ENCODE measurements at regions of chr7 and their contacts with region 1.

Region 1: GRCh38 chr7:80699045-80699638 is 60.7 kb downstream of the CD36 start:
- DNase-seq: no peak
- H3K4me3 ChIP-seq: no peak overlapping the region
- H3K27ac ChIP-seq: no peak overlapping the region
- H3K4me1 ChIP-seq: no peaks in the 10 kb centered on the region
- H3K27me3 ChIP-seq: no peaks in the 10 kb centered on the region
- CTCF ChIP-seq: peak; percentile 64 to 78 (median 70)
- POLR2A ChIP-seq: no peak

Region 2: DNA sequence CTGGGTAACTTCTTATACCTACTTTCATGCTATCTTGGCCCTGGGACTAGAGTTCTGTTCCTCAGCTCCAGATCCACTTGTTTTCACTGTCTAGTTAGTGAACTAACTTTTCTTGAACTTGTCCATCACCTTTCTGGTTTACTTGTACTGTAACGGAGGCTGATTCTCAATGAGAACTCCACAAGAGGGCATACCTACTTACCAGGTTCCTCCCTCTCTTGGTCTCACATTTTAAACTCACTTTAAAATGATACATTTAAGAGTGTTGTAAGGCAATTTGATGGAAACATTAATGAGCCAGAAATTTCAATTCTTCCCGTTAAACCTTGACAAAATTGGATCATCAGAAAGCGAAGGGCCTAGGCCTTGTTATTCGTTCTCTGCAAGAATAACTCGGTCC is 1357.2 kb before region 1 on chr7:
- intact Hi-C with region 1: no loop called
- DNase-seq: no peak
- H3K4me3 ChIP-seq: no peak overlapping the region
- H3K27ac ChIP-seq: no peak overlapping the region
- H3K4me1 ChIP-seq: no peaks in the 10 kb centered on the region
- H3K27me3 ChIP-seq: no peaks in the 10 kb centered on the region
- CTCF ChIP-seq: no peak
- POLR2A ChIP-seq: no peak

Region 3: DNA sequence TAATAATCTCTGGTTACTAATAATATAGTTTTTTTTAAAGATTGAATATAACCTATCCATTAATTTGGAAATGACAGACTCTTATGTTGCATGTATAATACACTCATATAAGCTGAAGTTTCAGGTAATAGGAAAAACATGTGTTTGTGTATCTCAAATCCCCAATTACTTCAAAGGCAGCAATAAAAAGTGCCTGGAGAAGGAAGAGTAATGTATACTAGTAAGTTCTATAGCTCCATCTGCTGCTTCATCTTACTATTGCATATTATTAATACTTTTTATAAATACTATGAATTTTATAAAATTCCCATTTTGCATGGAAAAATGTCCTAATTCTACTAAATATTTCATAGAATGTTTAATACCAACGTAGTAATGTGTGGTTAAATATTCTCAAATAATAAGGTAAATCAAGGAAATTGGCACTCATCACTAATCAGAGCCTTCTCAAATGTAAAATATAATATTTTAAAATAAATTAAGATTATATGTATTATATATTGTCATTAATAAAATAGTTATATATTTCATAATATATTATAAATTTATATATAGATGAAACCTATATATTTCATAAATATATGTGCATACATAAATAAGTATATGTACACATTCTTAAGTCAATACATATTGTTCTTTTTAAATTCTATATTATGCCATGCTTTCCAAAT is 758.8 kb after region 1 on chr7:
- intact Hi-C with region 1: loop called (anchors 5 kb)
- DNase-seq: no peak
- H3K4me3 ChIP-seq: no peak overlapping the region
- H3K27ac ChIP-seq: no peak overlapping the region
- H3K4me1 ChIP-seq: no peaks in the 10 kb centered on the region
- H3K27me3 ChIP-seq: no peaks in the 10 kb centered on the region
- CTCF ChIP-seq: peak in 1 of 4 experiments; percentile 22
- POLR2A ChIP-seq: no peak

Measured in uterus (tissue), 4 donors.